T-cell (primary cell): ENCODE measurements at regions of chr13 and their contacts with region 1.

Region 1: DNA sequence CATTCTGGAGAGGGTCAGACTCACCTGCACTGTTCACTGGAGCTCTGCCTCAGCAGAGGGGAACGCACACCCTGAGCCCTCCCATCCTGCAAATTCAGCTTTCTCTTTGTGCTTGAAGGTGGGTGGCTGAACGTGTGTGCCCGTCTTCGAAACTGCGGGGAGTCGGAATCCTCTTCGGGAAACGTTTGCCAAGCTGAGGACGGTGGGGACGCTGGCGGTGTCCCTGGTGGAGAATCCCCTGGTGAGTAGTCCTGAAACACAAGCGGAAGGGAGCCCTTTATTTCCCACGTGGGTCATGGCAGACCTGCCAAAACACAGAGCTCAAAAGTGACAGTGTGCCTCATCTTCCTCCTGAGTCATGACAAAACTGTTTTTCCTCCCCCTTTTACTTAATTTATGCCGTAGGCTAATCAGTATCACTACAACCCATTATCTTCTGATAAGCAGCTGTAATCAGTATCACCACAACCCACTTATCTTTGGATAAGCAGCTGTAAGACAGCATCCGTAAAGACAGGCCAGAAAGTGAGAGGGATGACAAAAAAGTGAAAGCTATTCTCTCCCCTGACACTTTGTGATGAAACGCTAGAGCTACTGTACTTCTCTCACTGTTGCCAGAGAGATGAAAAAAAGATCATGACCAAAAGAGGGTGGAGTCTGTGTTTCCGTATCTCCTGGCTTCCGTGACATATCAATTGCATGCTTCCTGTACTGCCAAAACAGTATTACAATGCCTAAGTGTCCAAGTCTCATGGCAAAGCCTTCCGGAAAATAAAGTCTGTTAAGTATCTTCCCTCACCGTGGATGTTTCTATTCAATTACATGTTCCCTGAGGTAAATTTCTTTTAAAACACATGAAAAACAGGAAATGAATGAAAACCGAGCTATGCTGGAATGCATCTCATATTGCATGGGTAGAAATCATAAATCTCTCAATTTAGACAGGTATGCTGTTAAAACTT is 155.5 kb downstream of the TBC1D4 start:
- DNase-seq: peak; percentile 5 to 84 (median 34)
- ATAC-seq: peak; percentile 91 to 93 (median 92)
- H3K4me3 ChIP-seq: peak overlapping the region; percentile 62 to 82
- H3K4me3 Mint-ChIP-seq: peak overlapping the region; percentile 87 to 91 (median 89)
- H3K27ac ChIP-seq: peak overlapping the region; percentile 86
- H3K27ac Mint-ChIP-seq: peak overlapping the region; percentile 96 to 99
- H3K4me1 ChIP-seq: peaks cover 4 to 40% of the 10 kb centered on the region in 2 experiments
- H3K4me1 Mint-ChIP-seq: peaks cover 45 to 63% (median 47%) of the 10 kb centered on the region in 3 donors
- H3K27me3 ChIP-seq: no peaks in the 10 kb centered on the region
- H3K27me3 Mint-ChIP-seq: no peaks in the 10 kb centered on the region

Region 2: GRCh38 chr13:75309981-75310580 is 16.4 kb before region 1 on chr13:
- CTCF ChIA-PET with region 1: interaction called, 3 to 7 read pairs
- POLR2A ChIA-PET with region 1: interaction called, 4 to 15 read pairs
- DNase-seq: no peak
- ATAC-seq: no peak
- H3K4me3 ChIP-seq: no peak overlapping the region
- H3K4me3 Mint-ChIP-seq: peak overlapping the region in 1 of 3 donors; percentile 10
- H3K27ac ChIP-seq: no peak overlapping the region
- H3K27ac Mint-ChIP-seq: no peak overlapping the region
- H3K4me1 ChIP-seq: peaks cover 0 to 5% of the 10 kb centered on the region in 2 experiments
- H3K4me1 Mint-ChIP-seq: peaks cover 14 to 32% (median 14%) of the 10 kb centered on the region in 3 donors
- H3K27me3 ChIP-seq: no peaks in the 10 kb centered on the region
- H3K27me3 Mint-ChIP-seq: no peaks in the 10 kb centered on the region

Region 3: GRCh38 chr13:75357576-75358289 is 31.3 kb after region 1 on chr13:
- CTCF ChIA-PET with region 1: interaction called, 6 to 14 read pairs
- POLR2A ChIA-PET with region 1: interaction called in 1 of 2 experiments, 7 read pairs
- DNase-seq: peak in 34 of 35 experiments; percentile 19 to 74 (median 42)
- ATAC-seq: peak; percentile 78 to 100 (median 94)
- H3K4me3 ChIP-seq: no peak overlapping the region
- H3K4me3 Mint-ChIP-seq: no peak overlapping the region
- H3K27ac ChIP-seq: no peak overlapping the region
- H3K27ac Mint-ChIP-seq: no peak overlapping the region
- H3K4me1 ChIP-seq: peaks cover 0 to 4% of the 10 kb centered on the region in 2 experiments
- H3K4me1 Mint-ChIP-seq: peaks cover 4 to 15% (median 4%) of the 10 kb centered on the region in 3 donors
- H3K27me3 ChIP-seq: peaks cover 0 to 3% of the 10 kb centered on the region in 2 experiments
- H3K27me3 Mint-ChIP-seq: peaks cover 0 to 3% of the 10 kb centered on the region in 2 donors

Region 4: GRCh38 chr13:75365724-75366173 is 39.3 kb after region 1 on chr13:
- CTCF ChIA-PET with region 1: interaction called in 1 of 2 experiments, 18 read pairs
- POLR2A ChIA-PET with region 1: interaction called in 1 of 2 experiments, 3 read pairs
- DNase-seq: peak in 1 of 35 experiments; percentile 24
- ATAC-seq: peak in 2 of 4 experiments; percentile 35 to 39
- H3K4me3 ChIP-seq: no peak overlapping the region
- H3K4me3 Mint-ChIP-seq: no peak overlapping the region
- H3K27ac ChIP-seq: no peak overlapping the region
- H3K27ac Mint-ChIP-seq: no peak overlapping the region
- H3K4me1 ChIP-seq: no peaks in the 10 kb centered on the region
- H3K4me1 Mint-ChIP-seq: peaks cover 6 to 10% (median 8%) of the 10 kb centered on the region in 3 donors
- H3K27me3 ChIP-seq: no peaks in the 10 kb centered on the region
- H3K27me3 Mint-ChIP-seq: peaks cover 0 to 6% of the 10 kb centered on the region in 2 donors

Region 5: DNA sequence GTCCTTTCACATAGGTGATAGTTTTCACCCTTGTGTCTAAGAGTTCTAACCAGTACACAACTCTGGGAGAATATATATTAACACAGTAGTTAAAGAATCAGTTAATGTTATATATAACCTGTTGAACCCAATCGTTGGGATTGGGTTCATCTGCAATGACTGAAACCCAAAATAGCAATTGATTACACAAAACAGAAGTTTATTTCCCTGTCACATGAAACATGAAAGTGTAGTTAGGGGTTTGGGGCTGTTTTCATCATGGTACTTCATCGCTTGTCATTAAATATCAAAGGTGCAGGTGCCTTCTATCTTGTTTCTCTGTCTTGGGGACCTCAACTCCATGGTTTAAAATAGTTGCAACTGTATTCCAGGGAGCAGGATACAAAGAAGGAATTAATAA is 48.9 kb after region 1 on chr13:
- CTCF ChIA-PET with region 1: interaction called, 6 to 14 read pairs
- POLR2A ChIA-PET with region 1: no interaction called
- DNase-seq: no peak
- ATAC-seq: no peak
- H3K4me3 ChIP-seq: no peak overlapping the region
- H3K4me3 Mint-ChIP-seq: no peak overlapping the region
- H3K27ac ChIP-seq: no peak overlapping the region
- H3K27ac Mint-ChIP-seq: no peak overlapping the region
- H3K4me1 ChIP-seq: no peaks in the 10 kb centered on the region
- H3K4me1 Mint-ChIP-seq: no peaks in the 10 kb centered on the region
- H3K27me3 ChIP-seq: no peaks in the 10 kb centered on the region
- H3K27me3 Mint-ChIP-seq: peaks cover 0 to 3% of the 10 kb centered on the region in 2 donors

Region 6: GRCh38 chr13:76948149-76948548 is 1621.7 kb after region 1 on chr13 and contains the start of gene ACOD1:
- CTCF ChIA-PET with region 1: no interaction called
- POLR2A ChIA-PET with region 1: interaction called in 1 of 2 experiments, 10 read pairs
- DNase-seq: no peak
- ATAC-seq: no peak
- H3K4me3 ChIP-seq: no peak within 1 kb of the TSS
- H3K4me3 Mint-ChIP-seq: no peak within 1 kb of the TSS
- H3K27ac ChIP-seq: no peak within 1 kb of the TSS
- H3K27ac Mint-ChIP-seq: no peak within 1 kb of the TSS
- H3K4me1 ChIP-seq: no peaks in the 10 kb centered on the region
- H3K4me1 Mint-ChIP-seq: no peaks in the 10 kb centered on the region
- H3K27me3 ChIP-seq: peaks cover 0 to 2% of the 10 kb centered on the region in 2 experiments
- H3K27me3 Mint-ChIP-seq: peaks cover 11 to 16% of the 10 kb centered on the region in 2 donors
- total RNA-seq, gene ACOD1: not detected